Right cardiac atrium (tissue), 5 donors: ENCODE measurements at regions of chr13 and their contacts with region 1.

Region 1: GRCh38 chr13:44470638-44471562 is 97.3 kb downstream of the SERP2 start:
- DNase-seq: no peak
- ATAC-seq: no peak
- H3K4me3 ChIP-seq: no peak overlapping the region
- H3K27ac ChIP-seq: no peak overlapping the region
- H3K4me1 ChIP-seq: peaks cover 1% of the 10 kb centered on the region
- H3K27me3 ChIP-seq: no peaks in the 10 kb centered on the region

Region 2: GRCh38 chr13:43905435-43906031 is 565.4 kb before region 1 on chr13:
- intact Hi-C with region 1: loop called in 2 of 4 experiments (anchors 5 to 10 kb)
- DNase-seq: no peak
- ATAC-seq: peak; percentile 64 to 69
- H3K4me3 ChIP-seq: no peak overlapping the region
- H3K27ac ChIP-seq: no peak overlapping the region
- H3K4me1 ChIP-seq: no peaks in the 10 kb centered on the region
- H3K27me3 ChIP-seq: no peaks in the 10 kb centered on the region